PC-9 (cell line): ENCODE measurements at regions of chr22 and their contacts with region 1.

Region 1: GRCh38 chr22:38201710-38202436 is at the start of gene MAFF:
- DNase-seq: peak; percentile 95 to 97
- H3K4me3 ChIP-seq: peak within 1 kb of the TSS; percentile 93
- H3K27ac ChIP-seq: peak within 1 kb of the TSS; percentile 91
- H3K4me1 ChIP-seq: peaks cover 14% of the 10 kb centered on the region
- H3K27me3 ChIP-seq: no peaks in the 10 kb centered on the region
- CTCF ChIP-seq: no peak
- total RNA-seq, gene MAFF: 27.9 and 41.8 TPM in 2 replicates

Region 2: DNA sequence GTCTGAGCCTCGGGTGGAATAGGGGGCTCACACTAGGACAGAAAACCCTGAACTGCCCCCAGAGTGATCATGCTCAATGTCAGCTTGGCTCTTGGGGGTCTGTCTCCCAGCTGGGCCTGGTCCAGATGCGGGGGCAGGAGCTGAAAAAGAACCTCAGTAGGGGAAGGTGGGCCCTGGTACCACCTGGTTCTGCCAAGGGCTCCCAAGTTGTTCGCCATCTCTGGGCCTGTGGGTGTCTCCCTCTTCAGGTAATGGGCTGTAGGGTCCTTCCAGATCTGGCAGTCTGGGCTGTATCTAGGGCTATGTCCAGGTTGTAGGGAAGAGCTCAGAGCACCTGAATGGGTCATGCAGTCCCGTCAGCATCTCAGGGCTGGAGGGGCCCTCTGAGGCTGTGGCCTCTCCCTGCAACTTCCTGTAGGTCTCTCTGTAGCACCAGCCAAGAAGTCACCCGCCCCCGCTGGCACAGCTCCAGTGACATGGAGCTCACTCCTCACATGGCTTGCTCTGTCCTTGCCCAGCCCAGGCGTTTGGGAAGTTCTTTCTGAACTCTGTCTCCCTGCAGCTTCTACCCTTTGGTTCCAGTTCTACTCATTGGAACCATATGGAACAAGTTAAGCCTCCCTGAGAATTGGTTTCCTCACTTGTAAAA is 184.5 kb before region 1 on chr22:
- CTCF ChIA-PET with region 1: no interaction called
- POLR2A ChIA-PET with region 1: no interaction called
- intact Hi-C with region 1: no loop called
- DNase-seq: peak in 1 of 2 experiments; percentile 53
- H3K4me3 ChIP-seq: no peak overlapping the region
- H3K27ac ChIP-seq: no peak overlapping the region
- H3K4me1 ChIP-seq: no peaks in the 10 kb centered on the region
- H3K27me3 ChIP-seq: no peaks in the 10 kb centered on the region
- CTCF ChIP-seq: no peak

Region 3: GRCh38 chr22:38114484-38115398 is 87.1 kb before region 1 on chr22:
- CTCF ChIA-PET with region 1: no interaction called
- POLR2A ChIA-PET with region 1: interaction called, 8 read pairs
- intact Hi-C with region 1: loop called (anchors 2 kb)
- DNase-seq: peak; percentile 69 to 90
- H3K4me3 ChIP-seq: no peak overlapping the region
- H3K27ac ChIP-seq: no peak overlapping the region
- H3K4me1 ChIP-seq: peaks cover 14% of the 10 kb centered on the region
- H3K27me3 ChIP-seq: no peaks in the 10 kb centered on the region
- CTCF ChIP-seq: peak; percentile 99

Region 4: GRCh38 chr22:38181453-38182247 is 20.2 kb before region 1 on chr22 and contains the start of gene PLA2G6:
- CTCF ChIA-PET with region 1: no interaction called
- POLR2A ChIA-PET with region 1: interaction called, 5 read pairs
- intact Hi-C with region 1: loop called (anchors 1 kb)
- DNase-seq: peak; percentile 99 to 100
- H3K4me3 ChIP-seq: peak within 1 kb of the TSS; percentile 66
- H3K27ac ChIP-seq: peak within 1 kb of the TSS; percentile 98
- H3K4me1 ChIP-seq: peaks cover 78% of the 10 kb centered on the region
- H3K27me3 ChIP-seq: no peaks in the 10 kb centered on the region
- CTCF ChIP-seq: no peak
- total RNA-seq, gene PLA2G6: 39.8 and 45.6 TPM in 2 replicates

Region 5: GRCh38 chr22:38240734-38241252 is 38.9 kb after region 1 on chr22:
- CTCF ChIA-PET with region 1: no interaction called
- POLR2A ChIA-PET with region 1: interaction called, 6 read pairs
- intact Hi-C with region 1: loop called (anchors 1 kb)
- DNase-seq: peak; percentile 80 to 95
- H3K4me3 ChIP-seq: peak overlapping the region; percentile 1; the same call in 1 of the 2 replicates
- H3K27ac ChIP-seq: peak overlapping the region; percentile 97
- H3K4me1 ChIP-seq: peaks cover 66% of the 10 kb centered on the region
- H3K27me3 ChIP-seq: no peaks in the 10 kb centered on the region
- CTCF ChIP-seq: no peak

Region 6: DNA sequence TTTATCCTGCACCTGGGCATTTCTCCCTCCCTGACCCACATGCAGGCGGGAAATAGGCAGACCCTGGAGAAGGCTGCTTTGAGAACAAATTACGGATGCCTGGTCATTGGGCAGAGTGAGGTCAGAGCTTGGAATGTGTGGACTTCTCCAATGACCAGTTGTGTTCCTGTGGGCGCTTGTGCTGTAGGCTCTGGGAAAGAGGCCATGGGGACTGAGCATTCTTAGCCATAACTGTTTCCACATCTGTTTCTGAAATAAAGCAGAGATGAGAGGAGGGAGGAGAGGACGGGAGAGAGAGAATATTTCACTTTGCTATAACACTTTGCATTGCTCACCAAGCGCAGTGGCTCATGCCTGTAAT is 82.1 kb after region 1 on chr22:
- CTCF ChIA-PET with region 1: no interaction called
- POLR2A ChIA-PET with region 1: interaction called, 12 read pairs
- intact Hi-C with region 1: no loop called
- DNase-seq: peak in 1 of 2 experiments; percentile 81
- H3K4me3 ChIP-seq: peak overlapping the region; percentile 13; the same call in 1 of the 2 replicates
- H3K27ac ChIP-seq: peak overlapping the region; percentile 88
- H3K4me1 ChIP-seq: peaks cover 53% of the 10 kb centered on the region
- H3K27me3 ChIP-seq: no peaks in the 10 kb centered on the region
- CTCF ChIP-seq: no peak

Region 7: GRCh38 chr22:38755911-38756532 is 554.1 kb after region 1 on chr22 and contains the start of gene SUN2:
- CTCF ChIA-PET with region 1: no interaction called
- POLR2A ChIA-PET with region 1: interaction called, 12 read pairs
- intact Hi-C with region 1: no loop called
- DNase-seq: peak; percentile 71 to 90
- H3K4me3 ChIP-seq: peak within 1 kb of the TSS; percentile 89
- H3K27ac ChIP-seq: peak within 1 kb of the TSS; percentile 87
- H3K4me1 ChIP-seq: peaks cover 55% of the 10 kb centered on the region
- H3K27me3 ChIP-seq: no peaks in the 10 kb centered on the region
- CTCF ChIP-seq: no peak
- total RNA-seq, gene SUN2: 169 and 220 TPM in 2 replicates